ENCODE measurements at regions of chr15 and their contacts with region 1.

Region 1: GRCh38 chr15:100341662-100342560 is at the start of gene ADAMTS17:
- DNase-seq: peak; percentile 95
- H3K4me3 Mint-ChIP-seq: peak within 1 kb of the TSS; percentile 54
- H3K27ac Mint-ChIP-seq: no peak within 1 kb of the TSS
- H3K4me1 Mint-ChIP-seq: peaks cover 15% of the 10 kb centered on the region
- H3K27me3 Mint-ChIP-seq: no peaks in the 10 kb centered on the region
- total RNA-seq, gene ADAMTS17: 0.99 to 1.2 TPM

Region 2: DNA sequence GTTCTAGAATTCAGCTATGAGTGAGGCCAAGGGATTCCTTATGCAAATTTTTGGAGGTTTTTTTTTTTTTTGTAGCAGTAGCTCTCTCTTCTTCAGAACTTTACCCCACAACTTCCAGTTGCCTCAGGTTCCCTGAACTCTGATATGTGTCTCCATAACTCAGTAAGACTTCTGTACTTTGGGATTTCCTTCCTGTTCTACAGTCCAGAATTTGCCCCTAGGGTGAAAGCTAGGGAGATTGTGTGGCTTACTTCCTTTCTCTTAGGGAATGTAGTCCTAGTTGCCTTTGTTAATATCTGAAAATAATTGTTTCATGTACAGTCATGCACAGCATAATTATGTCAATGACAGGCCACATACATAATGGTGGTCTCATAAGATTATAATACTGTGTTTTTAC is 1059.8 kb before region 1 on chr15:
- CTCF ChIA-PET with region 1: no interaction called
- POLR2A ChIA-PET with region 1: no interaction called
- intact Hi-C with region 1: loop called (anchors 10 kb)
- DNase-seq: no peak
- H3K4me3 Mint-ChIP-seq: no peak overlapping the region
- H3K27ac Mint-ChIP-seq: no peak overlapping the region
- H3K4me1 Mint-ChIP-seq: peaks cover 40% of the 10 kb centered on the region
- H3K27me3 Mint-ChIP-seq: no peaks in the 10 kb centered on the region

Region 3: DNA sequence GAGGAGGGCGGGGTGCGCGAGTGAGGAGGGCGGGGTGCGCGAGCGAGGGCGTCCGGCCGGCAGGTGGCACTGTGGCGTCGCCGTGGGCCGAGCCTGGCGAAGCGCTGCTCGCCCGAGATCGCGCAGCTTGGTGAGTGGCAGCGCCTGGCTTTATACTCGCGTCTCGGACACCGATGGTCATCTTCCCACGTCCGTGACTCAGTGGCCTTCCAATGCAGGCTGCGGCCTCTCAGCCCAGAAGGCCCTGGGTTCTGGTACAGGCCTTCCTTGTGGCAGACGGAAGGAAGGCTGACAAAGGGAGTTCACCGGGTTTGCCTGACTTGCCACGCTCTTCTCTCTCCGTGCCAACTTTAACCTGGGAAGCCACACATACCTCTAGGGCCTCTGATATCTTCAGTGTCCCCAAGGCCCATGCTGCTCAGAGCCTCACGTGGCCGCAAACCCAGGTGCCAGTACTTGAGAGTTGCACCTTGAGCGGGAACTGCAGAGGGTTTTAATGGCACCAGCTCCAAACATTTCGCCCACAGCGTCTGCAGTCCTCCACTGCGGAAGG is 413.4 kb before region 1 on chr15:
- CTCF ChIA-PET with region 1: interaction called, 23 read pairs
- POLR2A ChIA-PET with region 1: no interaction called
- intact Hi-C with region 1: loop called (anchors 2 kb)
- DNase-seq: peak; percentile 87
- H3K4me3 Mint-ChIP-seq: peak overlapping the region; percentile 77
- H3K27ac Mint-ChIP-seq: peak overlapping the region; percentile 42
- H3K4me1 Mint-ChIP-seq: peaks cover 8% of the 10 kb centered on the region
- H3K27me3 Mint-ChIP-seq: no peaks in the 10 kb centered on the region

Region 4: DNA sequence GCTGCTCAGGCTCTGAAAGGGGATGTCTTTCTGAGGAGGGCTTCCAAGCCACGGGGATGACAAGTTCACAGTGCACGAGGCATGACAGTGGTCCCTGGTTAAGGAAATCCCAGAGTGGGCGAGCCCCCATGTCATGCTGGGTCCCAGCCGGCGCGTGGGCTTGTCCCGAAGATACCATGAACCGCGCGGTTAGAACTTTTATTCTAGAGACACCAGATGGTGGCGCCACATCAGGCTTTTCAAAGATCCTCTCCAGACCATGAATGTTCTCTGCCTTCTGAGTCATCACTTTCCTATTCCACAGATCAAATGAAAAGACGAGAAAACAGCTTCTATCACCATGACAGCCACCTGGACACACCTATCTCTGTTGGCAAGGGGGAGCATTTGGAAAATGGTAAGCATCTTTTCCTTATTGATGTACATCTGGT is 380.9 kb before region 1 on chr15:
- CTCF ChIA-PET with region 1: interaction called, 10 read pairs
- POLR2A ChIA-PET with region 1: no interaction called
- intact Hi-C with region 1: loop called (anchors 1 kb)
- DNase-seq: peak; percentile 54
- H3K4me3 Mint-ChIP-seq: no peak overlapping the region
- H3K27ac Mint-ChIP-seq: no peak overlapping the region
- H3K4me1 Mint-ChIP-seq: peaks cover 11% of the 10 kb centered on the region
- H3K27me3 Mint-ChIP-seq: peaks cover 16% of the 10 kb centered on the region

Region 5: GRCh38 chr15:100330629-100331215 is 11.2 kb before region 1 on chr15:
- CTCF ChIA-PET with region 1: interaction called, 182 read pairs
- POLR2A ChIA-PET with region 1: interaction called, 3 read pairs
- intact Hi-C with region 1: loop called (anchors 1 kb)
- DNase-seq: peak; percentile 51
- H3K4me3 Mint-ChIP-seq: no peak overlapping the region
- H3K27ac Mint-ChIP-seq: peak overlapping the region; percentile 8
- H3K4me1 Mint-ChIP-seq: peaks cover 54% of the 10 kb centered on the region
- H3K27me3 Mint-ChIP-seq: no peaks in the 10 kb centered on the region

Measured in activated CD4-positive, alpha-beta memory T cell treated with anti-CD3 and anti-CD28 coated beads for 36 hours (primary cell).